Activated CD8-positive, alpha-beta memory T cell treated with anti-CD3 and anti-CD28 coated beads, Interleukin-2, amount 10 ng/mL, durations not matched to agents 7 days and 5 days (primary cell): ENCODE measurements at regions of chr6 and their contacts with region 1.

Region 1: GRCh38 chr6:91081452-91082067 is 494.7 kb upstream of the MAP3K7 start:
- DNase-seq: no peak
- ATAC-seq: no peak
- H3K4me3 Mint-ChIP-seq: no peak overlapping the region
- H3K27ac Mint-ChIP-seq: no peak overlapping the region
- H3K4me1 Mint-ChIP-seq: no peaks in the 10 kb centered on the region
- H3K27me3 Mint-ChIP-seq: no peaks in the 10 kb centered on the region

Region 2: DNA sequence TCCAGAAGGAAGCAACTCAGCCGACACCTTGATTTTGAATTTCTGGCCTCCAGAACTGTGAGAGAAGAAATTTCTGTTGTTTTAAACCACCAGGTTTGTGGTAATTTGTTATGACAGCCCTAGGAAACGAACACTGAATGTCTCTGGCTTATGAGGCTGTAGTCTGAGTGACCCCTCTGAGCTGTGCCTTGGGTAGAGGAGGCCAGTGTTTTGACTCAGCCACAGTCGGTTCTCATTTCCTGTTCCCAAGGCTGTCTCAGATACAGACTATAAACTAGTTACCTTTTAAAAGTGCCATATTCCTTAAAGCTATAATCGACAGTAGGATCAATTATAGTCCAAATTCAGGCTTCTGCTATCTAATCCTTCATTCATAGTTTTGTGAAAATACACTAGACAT is 103.5 kb before region 1 on chr6:
- CTCF ChIA-PET with region 1: no interaction called
- DNase-seq: no peak
- ATAC-seq: no peak
- H3K4me3 Mint-ChIP-seq: no peak overlapping the region
- H3K27ac Mint-ChIP-seq: no peak overlapping the region
- H3K4me1 Mint-ChIP-seq: no peaks in the 10 kb centered on the region
- H3K27me3 Mint-ChIP-seq: no peaks in the 10 kb centered on the region

Region 3: DNA sequence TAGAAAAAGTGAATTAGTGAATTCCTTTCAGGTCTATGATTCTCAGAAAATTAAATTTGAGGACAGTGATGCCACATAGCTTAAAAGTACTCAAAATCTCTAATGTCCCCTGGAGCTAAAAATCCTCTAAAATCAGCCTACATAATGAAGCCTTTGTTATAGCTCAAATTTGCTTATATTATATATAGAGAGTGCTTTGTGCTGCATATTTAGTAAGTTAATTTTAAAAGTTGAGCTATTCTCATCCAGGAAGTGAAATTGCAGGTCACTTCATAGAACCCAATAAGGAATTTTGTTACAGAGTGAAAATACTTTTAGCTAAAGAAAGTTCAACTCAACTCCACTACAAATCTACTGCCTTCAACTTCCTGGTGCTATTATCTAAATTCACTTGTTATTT is 12.8 kb after region 1 on chr6:
- CTCF ChIA-PET with region 1: interaction called, 10 read pairs
- DNase-seq: no peak
- ATAC-seq: no peak
- H3K4me3 Mint-ChIP-seq: no peak overlapping the region
- H3K27ac Mint-ChIP-seq: no peak overlapping the region
- H3K4me1 Mint-ChIP-seq: no peaks in the 10 kb centered on the region
- H3K27me3 Mint-ChIP-seq: no peaks in the 10 kb centered on the region

Region 4: DNA sequence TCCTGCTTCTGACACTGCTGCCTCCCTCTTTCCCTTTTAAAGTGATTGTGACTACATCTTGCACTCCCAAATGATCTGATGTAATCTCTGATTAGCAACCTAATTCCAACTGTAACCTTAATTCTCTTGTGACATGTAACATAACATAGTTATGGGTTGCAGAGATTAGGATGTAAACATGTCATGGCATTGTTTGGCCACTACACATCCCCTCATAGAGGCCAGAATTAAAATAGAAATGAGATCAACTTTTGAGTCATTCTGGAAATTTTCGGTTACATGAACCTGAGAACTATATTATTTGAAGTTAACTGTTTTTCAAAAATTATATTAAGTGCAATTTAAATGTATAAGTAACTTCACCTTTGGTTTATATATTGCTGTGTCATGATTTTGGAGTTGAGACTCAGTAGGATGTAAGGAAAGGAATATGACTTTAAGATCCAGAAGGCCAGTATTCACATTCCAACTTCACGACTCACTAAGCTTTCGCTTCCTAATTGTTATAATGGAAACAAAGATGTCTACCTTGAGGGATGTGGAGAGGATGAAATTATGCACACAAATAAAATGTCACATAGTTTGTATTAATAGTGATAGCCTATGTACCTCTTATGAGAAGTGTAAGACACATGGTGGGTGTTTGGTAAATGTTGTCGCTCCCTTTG is 117.2 kb after region 1 on chr6:
- CTCF ChIA-PET with region 1: no interaction called
- DNase-seq: no peak
- ATAC-seq: no peak
- H3K4me3 Mint-ChIP-seq: no peak overlapping the region
- H3K27ac Mint-ChIP-seq: no peak overlapping the region
- H3K4me1 Mint-ChIP-seq: no peaks in the 10 kb centered on the region
- H3K27me3 Mint-ChIP-seq: no peaks in the 10 kb centered on the region